ENCODE measurements at regions of chr14 and their contacts with region 1.

Region 1: GRCh38 chr14:73741386-73741875 is 27.2 kb upstream of the PNMA1 start:
- DNase-seq: no peak
- ATAC-seq: peak; percentile 72
- H3K4me3 Mint-ChIP-seq: peak overlapping the region; percentile 76
- H3K27ac Mint-ChIP-seq: peak overlapping the region; percentile 91
- H3K4me1 Mint-ChIP-seq: peaks cover 67% of the 10 kb centered on the region
- H3K27me3 Mint-ChIP-seq: no peaks in the 10 kb centered on the region
- CTCF ChIP-seq: no peak

Region 2: DNA sequence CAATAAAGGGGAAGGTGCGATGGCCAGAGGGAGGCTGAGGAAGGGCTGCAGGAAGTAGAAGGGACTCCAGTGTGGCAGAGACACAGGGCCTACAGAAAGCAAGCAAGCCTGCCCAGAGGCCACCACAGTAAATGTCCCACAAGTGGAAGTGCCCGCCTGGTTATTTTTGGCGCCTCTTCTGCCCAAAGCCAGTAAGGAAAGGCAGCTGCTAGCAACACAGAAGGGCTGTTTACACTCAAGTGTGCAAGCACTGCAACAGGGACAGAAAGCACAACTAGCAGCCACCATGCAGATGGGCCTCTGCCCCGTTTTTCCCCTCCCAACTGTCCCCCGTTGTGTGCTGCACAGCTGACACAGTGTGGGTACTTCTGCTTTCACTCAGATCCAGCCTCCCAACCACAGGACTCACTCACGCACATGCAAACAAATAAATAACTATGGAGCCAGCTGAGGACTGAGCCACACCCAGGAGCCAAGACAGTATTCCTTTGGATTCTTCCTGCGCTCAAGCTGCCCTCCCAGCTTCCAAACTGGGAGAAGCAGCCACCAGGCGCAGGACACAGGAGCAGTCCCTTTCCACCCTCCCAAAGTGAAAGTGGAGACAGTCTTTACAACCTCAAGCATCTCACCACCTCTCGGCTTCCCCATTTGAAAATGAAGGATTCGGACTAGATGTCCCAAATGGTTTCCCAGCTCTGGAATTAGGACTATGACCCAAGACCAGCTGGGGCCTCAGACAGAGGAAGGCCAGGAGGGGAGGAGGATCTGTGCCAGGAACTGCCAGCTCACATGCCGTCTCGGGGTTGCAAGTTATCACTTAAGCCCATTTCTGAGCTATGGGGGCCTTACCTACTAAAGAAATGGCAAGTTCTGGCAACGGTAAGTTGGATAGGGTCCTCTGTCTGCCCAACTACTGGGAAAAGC is 12.8 kb after region 1 on chr14:
- CTCF ChIA-PET with region 1: interaction called, 11 read pairs
- POLR2A ChIA-PET with region 1: interaction called, 183 read pairs
- intact Hi-C with region 1: loop called (anchors 1 kb)
- DNase-seq: peak; percentile 55
- ATAC-seq: peak; percentile 52
- H3K4me3 Mint-ChIP-seq: peak overlapping the region; percentile 77
- H3K27ac Mint-ChIP-seq: peak overlapping the region; percentile 92
- H3K4me1 Mint-ChIP-seq: peaks cover 95% of the 10 kb centered on the region
- H3K27me3 Mint-ChIP-seq: no peaks in the 10 kb centered on the region
- CTCF ChIP-seq: no peak

Region 3: DNA sequence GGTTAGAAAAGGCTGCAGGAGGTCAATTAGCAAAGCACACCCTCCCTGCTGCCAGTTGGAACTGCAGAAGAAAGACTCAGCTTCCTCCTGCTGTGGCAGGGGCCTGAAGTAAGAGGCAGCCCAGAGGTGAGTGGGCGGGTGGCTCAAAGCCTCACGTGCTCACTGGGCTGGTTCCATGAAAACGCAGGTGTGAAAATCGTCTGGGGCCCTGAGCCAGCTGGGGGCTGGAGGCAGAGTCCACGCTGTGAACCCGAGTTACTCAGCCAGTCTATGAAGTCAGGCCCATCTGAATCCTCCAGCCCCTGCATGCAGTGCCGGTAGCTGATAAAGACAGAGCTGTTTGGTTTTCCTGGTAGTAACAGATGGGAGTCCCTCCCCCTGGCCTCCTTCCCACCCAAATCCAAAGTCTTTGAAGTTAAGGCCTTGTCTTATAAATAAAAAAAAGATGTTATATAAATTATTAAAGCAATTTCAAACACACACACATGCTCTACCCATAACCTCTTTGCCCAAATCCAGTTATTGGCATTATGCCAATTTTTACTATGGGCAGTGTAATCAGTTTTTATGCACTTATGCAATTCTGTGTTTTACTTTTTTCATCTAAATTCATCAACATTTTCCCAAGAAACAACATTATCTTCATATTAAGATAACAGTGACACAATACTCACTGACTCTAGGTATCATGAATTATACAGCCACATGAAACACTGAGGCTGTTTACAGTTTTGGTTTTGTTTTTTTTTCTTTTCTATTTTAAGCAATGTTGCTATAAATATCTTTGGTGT is 30.6 kb after region 1 on chr14:
- CTCF ChIA-PET with region 1: interaction called, 30 read pairs
- POLR2A ChIA-PET with region 1: interaction called, 38 read pairs
- intact Hi-C with region 1: no loop called
- DNase-seq: peak; percentile 60
- ATAC-seq: peak; percentile 56
- H3K4me3 Mint-ChIP-seq: peak overlapping the region; percentile 74
- H3K27ac Mint-ChIP-seq: peak overlapping the region; percentile 95
- H3K4me1 Mint-ChIP-seq: peaks cover 88% of the 10 kb centered on the region
- H3K27me3 Mint-ChIP-seq: no peaks in the 10 kb centered on the region
- CTCF ChIP-seq: no peak

Region 4: DNA sequence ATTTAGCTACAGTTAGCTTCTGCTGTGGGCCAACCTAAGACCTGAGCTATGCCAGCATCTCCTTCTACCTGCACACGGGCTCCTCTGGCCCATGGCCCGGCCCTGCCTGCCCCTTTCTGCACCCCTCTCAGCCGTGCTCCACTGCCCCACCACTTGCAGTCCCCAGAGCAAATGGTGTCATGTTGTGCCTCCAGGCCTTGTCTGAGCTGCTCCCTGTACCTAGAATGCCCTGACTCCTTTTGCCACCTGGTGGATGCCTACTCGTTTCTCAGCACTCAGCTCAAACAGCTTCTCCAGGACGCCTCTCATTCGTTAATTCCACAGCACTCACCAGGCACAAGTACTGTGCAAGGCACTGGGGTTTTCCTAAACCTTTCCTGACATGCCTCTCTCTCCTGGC is 36.0 kb after region 1 on chr14:
- CTCF ChIA-PET with region 1: interaction called, 30 read pairs
- POLR2A ChIA-PET with region 1: interaction called, 38 read pairs
- intact Hi-C with region 1: no loop called
- DNase-seq: no peak
- ATAC-seq: peak; percentile 80
- H3K4me3 Mint-ChIP-seq: peak overlapping the region; percentile 12
- H3K27ac Mint-ChIP-seq: peak overlapping the region; percentile 67
- H3K4me1 Mint-ChIP-seq: peaks cover 69% of the 10 kb centered on the region
- H3K27me3 Mint-ChIP-seq: no peaks in the 10 kb centered on the region
- CTCF ChIP-seq: no peak

Region 5: DNA sequence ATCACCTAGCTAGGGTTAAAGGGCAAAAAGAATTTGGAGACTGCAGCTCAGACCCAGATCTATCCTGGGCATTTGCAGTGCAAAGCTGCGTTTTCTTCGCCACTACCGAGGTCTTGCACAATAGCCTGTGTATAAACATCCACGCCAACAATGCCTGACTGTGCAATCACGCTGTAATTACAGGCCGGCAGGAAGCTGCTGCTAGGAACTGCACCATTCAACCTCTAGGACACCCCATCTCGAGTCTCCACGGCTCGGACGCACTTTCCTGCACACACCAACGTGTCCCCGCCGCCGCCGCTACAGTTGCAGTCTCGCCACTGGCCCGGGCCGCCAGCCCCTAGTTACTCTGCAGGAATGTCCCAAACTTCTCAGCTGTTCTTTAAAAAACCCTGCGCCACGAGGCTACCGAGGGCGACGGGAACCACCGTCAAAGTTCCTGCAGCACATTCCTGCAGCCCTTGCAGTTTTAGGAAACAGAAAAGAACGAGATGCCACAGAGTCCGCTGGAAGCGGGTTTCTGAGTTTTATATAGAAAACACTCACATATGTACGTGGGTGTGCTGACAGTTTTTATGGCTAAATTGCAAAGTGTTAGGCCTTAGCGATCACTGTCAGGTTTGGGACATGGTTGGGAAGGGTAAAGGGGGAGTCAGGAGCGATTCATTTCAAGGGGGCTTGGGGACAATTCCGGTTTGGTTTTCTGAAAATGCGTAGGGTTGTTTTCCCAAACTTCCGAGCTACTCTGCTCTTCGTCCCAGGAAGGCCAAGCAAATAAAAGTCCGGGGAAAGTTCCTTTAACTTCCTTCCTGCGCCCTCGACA is 44.7 kb after region 1 on chr14:
- CTCF ChIA-PET with region 1: interaction called, 4 read pairs
- POLR2A ChIA-PET with region 1: interaction called, 44 read pairs
- intact Hi-C with region 1: loop called (anchors 1 kb)
- DNase-seq: peak; percentile 51
- ATAC-seq: peak; percentile 42
- H3K4me3 Mint-ChIP-seq: peak overlapping the region; percentile 93
- H3K27ac Mint-ChIP-seq: peak overlapping the region; percentile 89
- H3K4me1 Mint-ChIP-seq: peaks cover 59% of the 10 kb centered on the region
- H3K27me3 Mint-ChIP-seq: no peaks in the 10 kb centered on the region
- CTCF ChIP-seq: no peak

Region 6: GRCh38 chr14:73802431-73803188 is 61.2 kb after region 1 on chr14:
- CTCF ChIA-PET with region 1: no interaction called
- POLR2A ChIA-PET with region 1: no interaction called
- intact Hi-C with region 1: no loop called
- DNase-seq: no peak
- ATAC-seq: no peak
- H3K4me3 Mint-ChIP-seq: no peak overlapping the region
- H3K27ac Mint-ChIP-seq: no peak overlapping the region
- H3K4me1 Mint-ChIP-seq: no peaks in the 10 kb centered on the region
- H3K27me3 Mint-ChIP-seq: no peaks in the 10 kb centered on the region
- CTCF ChIP-seq: no peak

Region 7: DNA sequence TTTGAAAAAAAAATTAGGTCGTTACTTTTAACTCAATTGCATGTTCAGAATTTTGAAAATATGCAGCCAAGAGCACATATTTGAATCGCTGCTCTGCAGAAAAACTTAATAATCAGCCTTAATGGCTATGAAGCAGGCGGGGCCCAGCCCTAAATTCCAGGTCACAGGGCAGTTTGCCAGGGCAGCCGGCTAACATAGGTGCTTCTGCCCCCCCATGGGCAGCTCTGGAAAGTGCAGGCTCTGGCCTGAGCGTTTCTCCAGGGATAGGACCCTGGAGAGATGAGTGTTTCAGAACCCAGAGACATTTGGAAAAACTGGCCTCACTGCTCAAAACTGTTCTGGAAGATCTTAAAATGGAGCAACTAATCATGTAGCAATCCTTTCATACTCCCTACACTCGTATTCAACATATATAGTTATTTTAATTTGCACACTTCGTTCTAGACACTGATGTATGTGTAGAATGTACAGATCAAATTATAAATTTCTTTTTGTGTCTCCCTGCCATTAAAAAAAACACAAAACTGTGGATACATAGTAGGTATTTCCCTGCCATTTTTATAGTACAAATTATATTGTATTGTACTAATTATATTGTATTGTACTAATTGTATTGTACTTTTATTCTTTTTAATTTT is 84.2 kb after region 1 on chr14:
- CTCF ChIA-PET with region 1: interaction called, 12 read pairs
- POLR2A ChIA-PET with region 1: no interaction called
- intact Hi-C with region 1: no loop called
- DNase-seq: peak; percentile 61
- ATAC-seq: peak; percentile 99
- H3K4me3 Mint-ChIP-seq: no peak overlapping the region
- H3K27ac Mint-ChIP-seq: no peak overlapping the region
- H3K4me1 Mint-ChIP-seq: peaks cover 6% of the 10 kb centered on the region
- H3K27me3 Mint-ChIP-seq: no peaks in the 10 kb centered on the region
- CTCF ChIP-seq: peak; percentile 96

Region 8: GRCh38 chr14:73851644-73852382 is 110.4 kb after region 1 on chr14 and contains the start of gene PTGR2:
- CTCF ChIA-PET with region 1: interaction called, 3 read pairs
- POLR2A ChIA-PET with region 1: interaction called, 10 read pairs
- intact Hi-C with region 1: no loop called
- DNase-seq: peak; percentile 81
- ATAC-seq: peak; percentile 96
- H3K4me3 Mint-ChIP-seq: peak within 1 kb of the TSS; percentile 93
- H3K27ac Mint-ChIP-seq: peak within 1 kb of the TSS; percentile 96
- H3K4me1 Mint-ChIP-seq: peaks cover 21% of the 10 kb centered on the region
- H3K27me3 Mint-ChIP-seq: no peaks in the 10 kb centered on the region
- CTCF ChIP-seq: no peak
- total RNA-seq, gene PTGR2: 4.6 and 4.8 TPM in 2 replicates

Region 9: GRCh38 chr14:73935666-73936065 is 194.2 kb after region 1 on chr14:
- CTCF ChIA-PET with region 1: no interaction called
- POLR2A ChIA-PET with region 1: no interaction called
- intact Hi-C with region 1: no loop called
- DNase-seq: no peak
- ATAC-seq: no peak
- H3K4me3 Mint-ChIP-seq: no peak overlapping the region
- H3K27ac Mint-ChIP-seq: no peak overlapping the region
- H3K4me1 Mint-ChIP-seq: no peaks in the 10 kb centered on the region
- H3K27me3 Mint-ChIP-seq: no peaks in the 10 kb centered on the region
- CTCF ChIP-seq: no peak